Heart right ventricle (tissue), 16 donors: ENCODE measurements at regions of chr4 and their contacts with region 1.

Region 1: GRCh38 chr4:145154573-145154972 is 25.8 kb downstream of the OTUD4 start:
- DNase-seq: peak in 1 of 2 donors; percentile 23
- ATAC-seq: peak in 7 of 8 donors; percentile 67 to 89 (median 86)
- H3K4me3 ChIP-seq: no peak overlapping the region
- H3K27ac ChIP-seq: peak overlapping the region in 6 of 10 donors; percentile 61 to 76 (median 64)
- H3K4me1 ChIP-seq: peaks cover 0 to 35% (median 11%) of the 10 kb centered on the region in 9 donors
- H3K27me3 ChIP-seq: no peaks in the 10 kb centered on the region
- CTCF ChIP-seq: peak; percentile 32 to 68 (median 54)

Region 2: DNA sequence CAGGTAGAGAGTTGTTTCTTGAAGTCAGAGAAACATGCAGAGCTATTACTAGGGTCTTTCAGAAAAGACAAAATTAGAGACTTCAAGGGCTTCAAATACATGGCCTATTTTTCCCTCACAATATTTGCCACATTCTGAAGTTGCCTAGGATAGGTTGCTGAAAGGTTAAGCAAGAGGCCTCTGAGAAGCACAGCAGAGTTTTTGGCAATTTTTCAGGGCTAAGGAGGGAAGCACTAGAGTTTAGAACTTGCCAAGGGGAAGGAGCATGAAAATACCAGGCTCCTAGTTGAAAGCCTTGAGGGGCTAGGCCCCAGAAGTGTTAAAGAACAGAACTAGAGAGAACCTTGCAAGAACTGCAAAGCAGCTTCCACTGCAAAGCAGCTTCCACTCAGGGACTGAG is 142.9 kb before region 1 on chr4:
- intact Hi-C with region 1: no loop called
- DNase-seq: no peak
- ATAC-seq: peak in 1 of 8 donors; percentile 67
- H3K4me3 ChIP-seq: no peak overlapping the region
- H3K27ac ChIP-seq: no peak overlapping the region
- H3K4me1 ChIP-seq: peaks cover 0 to 27% (median 14%) of the 10 kb centered on the region in 9 donors
- H3K27me3 ChIP-seq: no peaks in the 10 kb centered on the region
- CTCF ChIP-seq: no peak

Region 3: DNA sequence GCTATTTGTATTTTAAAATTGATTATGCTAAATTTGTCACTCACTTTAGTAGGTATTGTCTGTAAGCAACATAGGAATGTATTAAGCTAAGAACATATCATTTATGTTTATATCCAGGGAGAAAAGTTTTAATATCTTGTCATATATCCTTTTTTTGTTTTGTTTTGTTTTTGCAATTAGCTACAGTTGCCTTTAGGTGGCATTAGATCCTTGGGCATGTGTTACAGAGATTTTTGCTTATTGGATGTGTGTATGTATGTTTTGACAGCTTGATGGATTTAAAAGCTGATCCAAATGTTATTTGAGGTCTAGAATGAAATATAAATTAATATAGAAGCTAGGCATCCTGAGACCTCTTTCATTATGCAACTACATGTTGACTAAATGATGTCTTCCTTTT is 62.0 kb after region 1 on chr4:
- intact Hi-C with region 1: loop called in 1 of 10 experiments (anchors 10 kb)
- DNase-seq: no peak
- ATAC-seq: peak in 1 of 8 donors; percentile 38
- H3K4me3 ChIP-seq: no peak overlapping the region
- H3K27ac ChIP-seq: no peak overlapping the region
- H3K4me1 ChIP-seq: peaks cover 0 to 18% (median 5%) of the 10 kb centered on the region in 9 donors
- H3K27me3 ChIP-seq: no peaks in the 10 kb centered on the region
- CTCF ChIP-seq: peak in 8 of 9 donors; percentile 29 to 67 (median 56)

Region 4: GRCh38 chr4:145557720-145558119 is 403.1 kb after region 1 on chr4:
- intact Hi-C with region 1: loop called in 1 of 10 experiments (anchors 10 kb)
- DNase-seq: peak; percentile 18 to 66
- ATAC-seq: peak; percentile 78 to 92 (median 84)
- H3K4me3 ChIP-seq: no peak overlapping the region
- H3K27ac ChIP-seq: no peak overlapping the region
- H3K4me1 ChIP-seq: peaks cover 0 to 3% (median 0%) of the 10 kb centered on the region in 9 donors
- H3K27me3 ChIP-seq: no peaks in the 10 kb centered on the region
- CTCF ChIP-seq: peak; percentile 72 to 95 (median 87)

Region 5: GRCh38 chr4:145609481-145610427 is 455.2 kb after region 1 on chr4:
- intact Hi-C with region 1: loop called in 5 of 10 experiments (anchors 5 to 10 kb)
- DNase-seq: peak in 1 of 2 donors; percentile 47
- ATAC-seq: peak in 5 of 8 donors; percentile 37 to 61 (median 55)
- H3K4me3 ChIP-seq: no peak overlapping the region
- H3K27ac ChIP-seq: peak overlapping the region in 1 of 10 donors; percentile 23
- H3K4me1 ChIP-seq: peaks cover 0 to 8% (median 0%) of the 10 kb centered on the region in 9 donors
- H3K27me3 ChIP-seq: no peaks in the 10 kb centered on the region
- CTCF ChIP-seq: peak; percentile 60 to 87 (median 74)